ENCODE measurements at regions of chr2 and their contacts with region 1.

Region 1: DNA sequence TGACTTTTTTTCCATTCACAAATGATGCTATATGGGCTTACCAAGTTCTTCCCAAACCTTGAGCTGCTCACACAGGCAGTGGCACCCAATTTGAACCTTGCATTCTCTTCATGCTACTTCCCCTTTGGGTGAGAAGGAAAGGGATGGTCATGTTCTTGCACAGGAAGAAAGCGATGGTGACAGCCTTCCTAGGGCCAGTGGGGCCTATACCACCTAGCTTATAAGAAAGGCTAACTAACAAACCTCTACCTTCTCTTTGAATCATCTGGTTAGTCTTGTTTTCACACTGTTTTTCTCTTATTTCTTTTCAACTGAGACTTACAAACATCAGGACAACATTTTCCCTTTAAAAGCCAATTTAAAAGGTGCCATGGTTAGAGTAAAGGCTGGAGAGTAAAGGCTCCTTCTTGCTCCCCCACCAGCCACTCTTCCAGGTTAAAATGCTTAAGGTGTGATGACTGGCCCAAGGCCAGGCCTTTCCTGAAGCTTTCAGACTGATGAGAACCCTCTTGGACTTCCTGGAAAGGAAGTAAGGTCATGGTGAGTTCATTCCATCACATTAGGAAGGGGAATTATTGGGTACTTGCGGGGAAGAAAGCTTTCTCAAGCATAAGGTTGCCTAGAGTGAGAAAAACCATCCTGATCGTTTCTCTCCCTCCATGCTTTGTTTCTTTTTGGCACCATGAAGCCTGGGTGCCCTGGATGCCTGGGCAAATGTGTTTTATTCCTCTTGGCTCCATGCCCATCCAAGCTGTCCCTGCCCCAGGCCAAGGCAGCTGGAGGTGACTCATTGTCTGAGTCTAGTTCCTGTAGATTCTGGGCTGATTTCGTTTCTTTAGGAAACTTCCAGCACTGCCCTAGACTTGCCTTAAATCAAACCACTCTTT is 41.4 kb upstream of the ITGB6 start:
- DNase-seq: peak; percentile 94
- H3K4me3 ChIP-seq: no peak overlapping the region
- H3K27ac ChIP-seq: peak overlapping the region; percentile 86
- H3K4me1 ChIP-seq: peaks cover 50% of the 10 kb centered on the region
- H3K27me3 ChIP-seq: no peaks in the 10 kb centered on the region
- CTCF ChIP-seq: no peak

Region 2: GRCh38 chr2:160109936-160110673 is 131.4 kb before region 1 on chr2:
- CTCF ChIA-PET with region 1: no interaction called
- dilution Hi-C with region 1: no loop called
- in situ Hi-C with region 1: no loop called
- intact Hi-C with region 1: loop called (anchors 5 kb)
- DNase-seq: peak; percentile 33
- H3K4me3 ChIP-seq: no peak overlapping the region
- H3K27ac ChIP-seq: peak overlapping the region; percentile 31
- H3K4me1 ChIP-seq: peaks cover 21% of the 10 kb centered on the region
- H3K27me3 ChIP-seq: no peaks in the 10 kb centered on the region
- CTCF ChIP-seq: peak; percentile 81 to 84

Region 3: GRCh38 chr2:160157861-160158829 is 83.3 kb before region 1 on chr2:
- CTCF ChIA-PET with region 1: interaction called, 5 read pairs
- dilution Hi-C with region 1: no loop called
- in situ Hi-C with region 1: no loop called
- intact Hi-C with region 1: loop called (anchors 2 kb)
- DNase-seq: peak; percentile 60
- H3K4me3 ChIP-seq: no peak overlapping the region
- H3K27ac ChIP-seq: peak overlapping the region; percentile 52
- H3K4me1 ChIP-seq: peaks cover 22% of the 10 kb centered on the region
- H3K27me3 ChIP-seq: no peaks in the 10 kb centered on the region
- CTCF ChIP-seq: no peak

Region 4: GRCh38 chr2:160194946-160195345 is 46.5 kb before region 1 on chr2:
- CTCF ChIA-PET with region 1: no interaction called
- dilution Hi-C with region 1: no loop called
- in situ Hi-C with region 1: no loop called
- intact Hi-C with region 1: loop called (anchors 2 kb)
- DNase-seq: no peak
- H3K4me3 ChIP-seq: no peak overlapping the region
- H3K27ac ChIP-seq: peak overlapping the region; percentile 43
- H3K4me1 ChIP-seq: peaks cover 38% of the 10 kb centered on the region
- H3K27me3 ChIP-seq: no peaks in the 10 kb centered on the region
- CTCF ChIP-seq: peak in 1 of 2 donors; percentile 1

Region 5: GRCh38 chr2:160324161-160324800 is 82.8 kb after region 1 on chr2:
- CTCF ChIA-PET with region 1: no interaction called
- dilution Hi-C with region 1: loop called (anchors 5 kb)
- in situ Hi-C with region 1: no loop called
- intact Hi-C with region 1: no loop called
- DNase-seq: peak; percentile 32
- H3K4me3 ChIP-seq: no peak overlapping the region
- H3K27ac ChIP-seq: no peak overlapping the region
- H3K4me1 ChIP-seq: no peaks in the 10 kb centered on the region
- H3K27me3 ChIP-seq: no peaks in the 10 kb centered on the region
- CTCF ChIP-seq: peak; percentile 80 to 84

Region 6: GRCh38 chr2:160407393-160408192 is 166.1 kb after region 1 on chr2:
- CTCF ChIA-PET with region 1: no interaction called
- dilution Hi-C with region 1: no loop called
- in situ Hi-C with region 1: no loop called
- intact Hi-C with region 1: no loop called
- DNase-seq: peak; percentile 55
- H3K4me3 ChIP-seq: peak overlapping the region; percentile 76 to 85 (median 84)
- H3K27ac ChIP-seq: peak overlapping the region; percentile 87
- H3K4me1 ChIP-seq: peaks cover 69% of the 10 kb centered on the region
- H3K27me3 ChIP-seq: no peaks in the 10 kb centered on the region
- CTCF ChIP-seq: no peak

Measured in mammary epithelial cell (primary cell).